Endothelial cell of umbilical vein (primary cell): ENCODE measurements at regions of chr14 and their contacts with region 1.

Region 1: DNA sequence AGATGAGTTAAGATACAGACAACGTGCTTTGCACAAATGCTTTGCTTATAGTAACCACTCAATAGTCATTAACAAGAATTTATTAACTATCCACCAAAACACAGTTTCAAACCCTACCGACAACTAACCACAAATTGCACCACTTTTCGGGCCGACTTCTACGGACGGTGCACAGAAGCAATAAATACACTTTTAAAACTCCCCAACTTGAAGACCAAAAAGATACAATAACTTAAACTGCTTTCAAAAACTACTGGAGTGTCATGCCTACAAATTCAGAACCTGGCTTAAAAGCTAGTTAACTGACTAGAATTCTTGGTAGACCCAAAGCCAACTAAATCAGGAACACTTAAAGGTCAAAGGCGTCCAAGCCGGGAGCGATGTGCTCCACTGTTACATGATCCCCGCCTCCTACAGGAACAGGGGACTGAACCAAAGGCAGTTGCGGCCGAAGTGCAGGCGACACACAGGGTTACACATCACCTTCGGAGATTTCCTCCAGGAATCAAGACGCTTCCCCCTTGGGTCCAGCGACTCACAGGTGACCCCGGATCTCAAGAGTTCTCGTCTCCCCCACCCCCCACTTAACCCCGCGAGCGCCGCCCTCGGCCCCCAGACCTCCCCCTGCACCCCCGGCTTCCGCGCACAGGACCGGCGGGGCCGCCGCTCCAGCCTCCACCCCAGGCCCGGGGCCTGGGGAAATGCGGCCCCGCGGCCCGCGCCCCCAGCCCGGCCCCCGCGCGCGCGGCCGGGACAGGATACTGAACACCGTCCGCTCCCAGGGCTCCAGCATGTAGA is 507 bp downstream of the SPTSSA start:
- DNase-seq: peak; percentile 58
- H3K4me3 ChIP-seq: peak overlapping the region; percentile 66 to 97 (median 88)
- H3K27ac ChIP-seq: peak overlapping the region; percentile 54
- H3K4me1 ChIP-seq: peaks cover 26% of the 10 kb centered on the region
- H3K27me3 ChIP-seq: no peaks in the 10 kb centered on the region
- CTCF ChIP-seq: no peak
- POLR2A ChIP-seq: no peak

Region 2: GRCh38 chr14:34496679-34497513 is 35.4 kb after region 1 on chr14:
- CTCF ChIA-PET with region 1: interaction called, 4 read pairs
- POLR2A ChIA-PET with region 1: interaction called, 3 read pairs
- dilution Hi-C with region 1: no loop called
- intact Hi-C with region 1: loop called (anchors 1 kb)
- DNase-seq: peak; percentile 64
- H3K4me3 ChIP-seq: no peak overlapping the region
- H3K27ac ChIP-seq: peak overlapping the region; percentile 34
- H3K4me1 ChIP-seq: peaks cover 10% of the 10 kb centered on the region
- H3K27me3 ChIP-seq: no peaks in the 10 kb centered on the region
- CTCF ChIP-seq: no peak
- POLR2A ChIP-seq: no peak

Region 3: DNA sequence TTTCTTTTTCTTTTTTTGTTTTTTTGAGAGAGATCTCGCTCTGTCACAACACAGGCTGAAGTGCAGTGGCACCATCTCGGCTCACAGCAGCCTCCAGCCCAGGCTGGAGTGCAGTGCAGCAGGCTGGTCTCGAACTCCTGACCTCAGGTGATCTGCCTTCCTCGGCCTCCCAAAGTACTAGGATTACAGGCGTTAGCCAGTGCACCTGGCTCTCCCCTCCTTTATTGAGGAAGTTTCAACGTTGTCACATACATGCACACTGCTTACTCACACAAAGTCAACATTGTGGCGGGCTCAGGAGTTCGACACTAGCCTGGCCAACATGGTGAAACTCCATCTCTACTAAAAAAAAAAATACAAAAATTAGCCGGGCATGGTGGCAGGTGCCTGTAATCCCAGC is 45.9 kb after region 1 on chr14:
- CTCF ChIA-PET with region 1: no interaction called
- POLR2A ChIA-PET with region 1: no interaction called
- dilution Hi-C with region 1: no loop called
- intact Hi-C with region 1: no loop called
- DNase-seq: no peak
- H3K4me3 ChIP-seq: no peak overlapping the region
- H3K27ac ChIP-seq: no peak overlapping the region
- H3K4me1 ChIP-seq: peaks cover 10% of the 10 kb centered on the region
- H3K27me3 ChIP-seq: no peaks in the 10 kb centered on the region
- CTCF ChIP-seq: no peak
- POLR2A ChIP-seq: no peak

Region 4: DNA sequence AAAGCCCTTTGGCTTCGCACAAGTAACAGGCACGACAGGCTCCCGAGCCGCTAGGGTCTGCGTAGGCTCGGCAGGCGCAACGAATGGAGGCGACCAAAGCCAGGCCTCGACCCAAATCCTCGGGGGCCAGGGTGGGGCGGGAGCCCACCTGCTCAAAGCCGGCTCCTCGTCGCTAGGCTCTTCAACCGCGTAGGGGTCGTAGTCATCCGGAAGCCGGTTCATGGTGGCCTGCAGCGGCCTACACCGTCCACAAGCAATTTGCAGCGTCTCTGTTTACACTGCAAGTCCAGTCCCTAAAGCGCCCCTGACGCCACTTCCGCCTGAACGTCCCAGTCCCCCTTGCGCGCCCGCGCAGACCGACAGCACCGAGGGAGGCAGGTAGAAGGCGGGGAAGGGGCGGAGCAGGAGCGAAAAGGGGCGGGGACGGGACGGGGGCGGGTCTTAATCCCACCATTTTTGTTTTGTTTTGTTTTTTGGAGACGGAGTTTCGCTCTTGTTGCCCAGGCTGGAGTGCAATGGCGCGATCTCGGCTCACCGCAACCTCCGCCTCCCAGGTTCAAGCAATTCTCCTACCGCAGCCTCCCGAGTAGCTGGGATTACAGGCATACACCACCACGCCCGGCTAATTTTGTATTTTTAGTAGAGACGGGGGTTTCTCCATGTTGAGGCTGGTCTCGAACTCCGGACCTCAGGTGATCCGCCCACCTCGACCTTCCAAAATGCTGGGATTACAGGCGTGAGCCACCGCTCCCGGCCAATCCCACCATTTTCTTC is 78.1 kb after region 1 on chr14 and contains the start of gene EAPP:
- CTCF ChIA-PET with region 1: interaction called, 3 read pairs
- POLR2A ChIA-PET with region 1: interaction called, 6 read pairs
- dilution Hi-C with region 1: no loop called
- intact Hi-C with region 1: loop called (anchors 5 kb)
- DNase-seq: peak; percentile 96
- H3K4me3 ChIP-seq: peak within 1 kb of the TSS; percentile 58 to 85 (median 80)
- H3K27ac ChIP-seq: peak within 1 kb of the TSS; percentile 89
- H3K4me1 ChIP-seq: peaks cover 5% of the 10 kb centered on the region
- H3K27me3 ChIP-seq: no peaks in the 10 kb centered on the region
- CTCF ChIP-seq: no peak
- POLR2A ChIP-seq: peak; percentile 87
- total RNA-seq, gene EAPP: 22.2 and 24.3 TPM in 2 replicates